A549 (cell line): ENCODE measurements at regions of chr2 and their contacts with region 1.

Region 1: DNA sequence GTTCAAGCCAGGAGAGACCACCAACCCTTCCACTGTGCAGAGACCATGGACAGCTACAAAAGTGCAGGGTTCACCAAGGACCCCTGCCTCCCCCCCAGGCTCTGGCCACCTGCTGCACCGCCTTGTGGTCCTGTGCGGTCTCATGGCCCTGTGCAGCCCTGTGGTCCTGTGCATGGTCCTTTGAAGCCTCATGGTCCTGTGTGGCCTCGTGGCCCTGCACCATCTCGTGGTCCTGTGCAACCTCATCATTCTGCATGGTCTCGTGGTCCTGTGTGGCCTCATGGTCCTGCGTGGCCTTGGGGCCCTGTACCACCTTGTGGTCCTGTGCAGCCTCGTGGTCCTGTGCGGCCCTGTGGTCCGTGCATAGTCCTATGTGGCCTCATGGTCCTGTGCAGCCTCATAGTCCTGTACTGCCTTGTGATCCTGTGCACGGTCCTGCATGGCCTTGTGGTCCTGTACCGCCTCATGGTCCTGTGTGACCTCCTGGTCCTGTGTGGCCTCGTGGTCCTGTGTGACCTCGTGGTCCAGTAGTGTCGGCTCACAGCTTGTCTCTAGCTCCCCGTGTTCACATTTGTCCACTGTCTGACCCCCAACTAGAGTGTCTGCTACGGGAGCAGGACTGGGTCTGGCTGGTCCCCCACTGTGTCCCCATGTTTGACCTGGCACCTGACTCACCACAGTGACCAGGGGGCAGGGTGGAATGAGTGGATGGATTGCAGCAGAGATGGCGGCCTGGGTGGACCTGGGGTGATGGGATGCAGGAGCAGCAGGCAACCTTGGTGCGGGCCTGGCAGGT is 20.0 kb upstream of the OTOS start:
- DNase-seq: no peak
- ATAC-seq: peak in 1 of 2 experiments; percentile 32; a peak in 2 of 6 replicates
- H3K4me3 ChIP-seq: no peak overlapping the region
- H3K27ac ChIP-seq: no peak overlapping the region
- H3K4me1 ChIP-seq: no peaks in the 10 kb centered on the region
- CTCF ChIP-seq: no peak
- EP300 ChIP-seq: no peak
- POLR2A ChIP-seq: no peak
- RAD21 ChIP-seq: no peak

Region 2: DNA sequence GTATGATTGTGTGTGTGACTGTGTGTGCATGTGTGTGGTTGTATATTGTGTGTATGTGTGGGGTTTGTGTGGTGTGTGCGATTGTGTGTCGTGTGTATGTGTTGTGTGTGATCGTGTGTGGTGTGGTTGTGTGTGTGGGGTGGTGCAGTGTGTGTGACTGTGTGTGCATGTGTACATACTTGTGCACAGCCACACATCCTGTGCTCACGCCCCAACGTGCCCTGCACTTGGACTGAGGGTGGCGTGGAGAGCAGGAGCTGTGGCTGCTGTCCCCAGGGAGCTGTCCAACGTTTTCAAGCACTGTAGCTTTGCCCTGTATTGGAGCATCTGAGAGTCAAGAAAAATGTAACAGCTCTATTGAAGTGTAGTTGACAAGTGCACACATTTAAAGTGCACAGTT is 516.5 kb before region 1 on chr2:
- CTCF ChIA-PET with region 1: no interaction called
- POLR2A ChIA-PET with region 1: no interaction called
- DNase-seq: peak in 1 of 2 experiments; percentile 38
- ATAC-seq: peak; percentile 52 to 74; a peak in 4 of 6 replicates
- H3K4me3 ChIP-seq: no peak overlapping the region
- H3K27ac ChIP-seq: no peak overlapping the region
- H3K4me1 ChIP-seq: no peaks in the 10 kb centered on the region
- CTCF ChIP-seq: no peak
- EP300 ChIP-seq: no peak
- POLR2A ChIP-seq: no peak
- RAD21 ChIP-seq: no peak

Region 3: GRCh38 chr2:240033330-240033678 is 127.2 kb before region 1 on chr2:
- CTCF ChIA-PET with region 1: no interaction called
- POLR2A ChIA-PET with region 1: no interaction called
- DNase-seq: no peak
- ATAC-seq: no peak; a peak in 1 of 6 replicates
- H3K4me3 ChIP-seq: no peak overlapping the region
- H3K27ac ChIP-seq: no peak overlapping the region
- H3K4me1 ChIP-seq: no peaks in the 10 kb centered on the region
- CTCF ChIP-seq: no peak
- EP300 ChIP-seq: no peak
- POLR2A ChIP-seq: no peak
- RAD21 ChIP-seq: no peak

Region 4: DNA sequence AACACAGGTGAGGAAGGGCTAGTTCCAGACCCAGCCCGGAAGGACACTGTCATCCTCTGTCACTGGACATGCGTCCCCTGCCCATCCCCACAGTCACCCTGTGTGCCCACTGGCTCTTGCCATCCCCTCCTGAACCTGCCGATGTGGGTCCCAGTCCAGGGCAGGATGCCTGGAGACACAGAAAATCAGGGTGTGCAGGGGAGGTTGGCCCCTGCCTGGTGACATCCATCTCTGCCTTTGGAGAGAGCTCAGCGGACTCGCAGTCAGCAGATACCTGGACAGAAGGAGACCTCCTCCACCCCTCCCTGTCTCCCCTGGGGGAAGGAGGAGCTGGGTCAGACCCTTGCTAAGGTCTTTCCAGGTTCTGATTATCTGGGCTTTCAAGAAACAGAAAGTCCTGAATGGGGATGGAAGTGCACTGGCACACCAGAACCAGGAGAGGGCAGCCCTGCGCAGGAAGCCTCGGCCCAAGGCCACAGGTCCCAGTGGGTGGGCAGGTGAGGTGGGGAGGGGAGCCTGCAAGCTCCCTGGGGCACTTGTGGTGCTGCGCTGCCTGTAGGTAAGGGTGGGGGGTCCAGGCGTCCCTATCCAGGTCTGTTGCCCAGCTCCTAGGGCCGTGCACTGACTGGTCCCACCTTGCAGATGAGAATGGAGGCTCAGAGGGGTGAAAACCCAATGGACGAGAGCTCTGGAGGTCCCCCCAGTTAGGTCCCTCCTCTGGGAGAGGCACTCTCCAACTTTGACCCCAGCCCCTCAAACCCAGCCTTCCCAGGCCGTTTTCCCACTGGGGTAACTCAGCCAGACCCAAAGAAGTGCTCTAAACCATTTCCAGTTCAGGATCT is 10.3 kb before region 1 on chr2:
- CTCF ChIA-PET with region 1: interaction called, 10 read pairs
- POLR2A ChIA-PET with region 1: no interaction called
- DNase-seq: peak; percentile 47 to 71
- ATAC-seq: peak; percentile 65 to 86
- H3K4me3 ChIP-seq: no peak overlapping the region
- H3K27ac ChIP-seq: no peak overlapping the region
- H3K4me1 ChIP-seq: no peaks in the 10 kb centered on the region
- CTCF ChIP-seq: peak; percentile 69
- EP300 ChIP-seq: no peak
- POLR2A ChIP-seq: no peak
- RAD21 ChIP-seq: peak; percentile 73 to 75